Caco-2 (cell line): ENCODE measurements at regions of chr12 and their contacts with region 1.

Region 1: GRCh38 chr12:54294152-54294952 is 6.5 kb downstream of the NFE2 start:
- DNase-seq: peak; percentile 65 to 78
- H3K4me3 ChIP-seq: no peak overlapping the region
- H3K4me3 Mint-ChIP-seq: no peak overlapping the region
- H3K27ac Mint-ChIP-seq: no peak overlapping the region
- H3K4me1 ChIP-seq: 0 out of 2 replicates have a peak, but pooled peaks cover 7% of the 10 kb centered on the region
- H3K4me1 Mint-ChIP-seq: peaks cover 6% of the 10 kb centered on the region
- H3K27me3 ChIP-seq: no peaks in the 10 kb centered on the region
- H3K27me3 Mint-ChIP-seq: no peaks in the 10 kb centered on the region
- CTCF ChIP-seq: peak; percentile 83 to 88

Region 2: GRCh38 chr12:54560374-54560858 is 266.1 kb after region 1 on chr12:
- CTCF ChIA-PET with region 1: no interaction called
- POLR2A ChIA-PET with region 1: no interaction called
- intact Hi-C with region 1: no loop called
- DNase-seq: no peak
- H3K4me3 ChIP-seq: no peak overlapping the region
- H3K4me3 Mint-ChIP-seq: no peak overlapping the region
- H3K27ac Mint-ChIP-seq: no peak overlapping the region
- H3K4me1 ChIP-seq: no peaks in the 10 kb centered on the region
- H3K4me1 Mint-ChIP-seq: no peaks in the 10 kb centered on the region
- H3K27me3 ChIP-seq: no peaks in the 10 kb centered on the region
- H3K27me3 Mint-ChIP-seq: peaks cover 30% of the 10 kb centered on the region
- CTCF ChIP-seq: no peak

Region 3: GRCh38 chr12:54596526-54596946 is 302.2 kb after region 1 on chr12:
- CTCF ChIA-PET with region 1: interaction called, 10 read pairs
- POLR2A ChIA-PET with region 1: no interaction called
- intact Hi-C with region 1: no loop called
- DNase-seq: peak; percentile 59 to 73
- H3K4me3 ChIP-seq: no peak overlapping the region
- H3K4me3 Mint-ChIP-seq: no peak overlapping the region
- H3K27ac Mint-ChIP-seq: no peak overlapping the region
- H3K4me1 ChIP-seq: no peaks in the 10 kb centered on the region
- H3K4me1 Mint-ChIP-seq: no peaks in the 10 kb centered on the region
- H3K27me3 ChIP-seq: no peaks in the 10 kb centered on the region; the same call in 1 of the 2 replicates
- H3K27me3 Mint-ChIP-seq: peaks cover 34% of the 10 kb centered on the region
- CTCF ChIP-seq: peak; percentile 74 to 83